ENCODE measurements at regions of chr7 and their contacts with region 1.

Region 1: GRCh38 chr7:144812379-144813283 is 23.2 kb downstream of the TPK1 start:
- DNase-seq: no peak
- ATAC-seq: peak; percentile 92
- H3K4me3 Mint-ChIP-seq: peak overlapping the region; percentile 68
- H3K27ac Mint-ChIP-seq: peak overlapping the region; percentile 93
- H3K4me1 Mint-ChIP-seq: peaks cover 44% of the 10 kb centered on the region
- H3K27me3 Mint-ChIP-seq: no peaks in the 10 kb centered on the region
- CTCF ChIP-seq: no peak

Region 2: DNA sequence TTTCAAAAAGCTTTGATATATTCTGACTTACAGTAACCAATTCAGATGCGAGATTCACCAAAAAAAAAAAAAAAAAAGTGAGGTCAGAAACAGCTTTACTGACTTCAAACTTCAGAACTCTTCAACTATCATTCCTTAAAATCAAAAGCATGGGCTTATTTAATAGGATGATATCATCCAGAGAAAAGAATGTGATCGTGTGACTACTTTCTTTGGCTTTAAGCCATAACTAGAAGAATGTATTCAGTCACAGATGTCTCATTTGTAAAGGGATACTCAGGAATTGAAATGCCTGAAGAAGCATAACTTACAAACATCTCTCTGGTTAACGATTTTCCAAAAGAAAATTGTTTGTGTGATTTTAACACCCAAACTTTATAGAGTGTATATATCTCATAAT is 11.7 kb after region 1 on chr7:
- CTCF ChIA-PET with region 1: interaction called, 3 read pairs
- POLR2A ChIA-PET with region 1: interaction called, 13 read pairs
- intact Hi-C with region 1: loop called (anchors 1 kb)
- DNase-seq: no peak
- ATAC-seq: no peak
- H3K4me3 Mint-ChIP-seq: no peak overlapping the region
- H3K27ac Mint-ChIP-seq: peak overlapping the region; percentile 31
- H3K4me1 Mint-ChIP-seq: peaks cover 64% of the 10 kb centered on the region
- H3K27me3 Mint-ChIP-seq: no peaks in the 10 kb centered on the region
- CTCF ChIP-seq: no peak

Region 3: DNA sequence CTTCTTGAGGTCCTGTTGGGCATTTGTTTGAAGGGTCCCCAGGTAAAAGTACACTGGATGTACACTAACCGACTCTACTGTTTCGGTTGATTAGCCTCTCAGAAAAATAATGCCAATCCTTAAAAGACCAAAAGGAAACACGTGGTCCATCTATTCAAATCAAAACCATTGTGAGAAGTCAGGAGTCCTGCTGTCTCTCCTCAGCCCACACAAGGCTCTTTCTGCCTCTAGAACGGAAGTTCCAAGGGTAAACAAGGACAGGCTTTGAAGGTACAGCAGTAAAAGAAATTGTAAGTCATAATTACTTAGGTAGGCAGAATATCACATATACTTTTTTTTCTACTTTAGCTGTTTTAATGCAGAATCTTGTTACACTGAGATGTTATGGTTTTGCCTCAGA is 94.9 kb after region 1 on chr7:
- CTCF ChIA-PET with region 1: no interaction called
- POLR2A ChIA-PET with region 1: no interaction called
- intact Hi-C with region 1: no loop called
- DNase-seq: no peak
- ATAC-seq: no peak
- H3K4me3 Mint-ChIP-seq: no peak overlapping the region
- H3K27ac Mint-ChIP-seq: no peak overlapping the region
- H3K4me1 Mint-ChIP-seq: peaks cover 22% of the 10 kb centered on the region
- H3K27me3 Mint-ChIP-seq: peaks cover 2% of the 10 kb centered on the region
- CTCF ChIP-seq: no peak

Measured in activated B cell treated with CpG ODN at 0.5 μM for 24 hours (primary cell).